ENCODE measurements at regions of chr7 and their contacts with region 1.

Region 1: GRCh38 chr7:47100817-47101435 is 481.0 kb downstream of the TNS3 start:
- H3K4me3 ChIP-seq: no peak overlapping the region
- H3K27ac ChIP-seq: no peak overlapping the region
- H3K4me1 ChIP-seq: no peaks in the 10 kb centered on the region
- CTCF ChIP-seq: no peak

Region 2: DNA sequence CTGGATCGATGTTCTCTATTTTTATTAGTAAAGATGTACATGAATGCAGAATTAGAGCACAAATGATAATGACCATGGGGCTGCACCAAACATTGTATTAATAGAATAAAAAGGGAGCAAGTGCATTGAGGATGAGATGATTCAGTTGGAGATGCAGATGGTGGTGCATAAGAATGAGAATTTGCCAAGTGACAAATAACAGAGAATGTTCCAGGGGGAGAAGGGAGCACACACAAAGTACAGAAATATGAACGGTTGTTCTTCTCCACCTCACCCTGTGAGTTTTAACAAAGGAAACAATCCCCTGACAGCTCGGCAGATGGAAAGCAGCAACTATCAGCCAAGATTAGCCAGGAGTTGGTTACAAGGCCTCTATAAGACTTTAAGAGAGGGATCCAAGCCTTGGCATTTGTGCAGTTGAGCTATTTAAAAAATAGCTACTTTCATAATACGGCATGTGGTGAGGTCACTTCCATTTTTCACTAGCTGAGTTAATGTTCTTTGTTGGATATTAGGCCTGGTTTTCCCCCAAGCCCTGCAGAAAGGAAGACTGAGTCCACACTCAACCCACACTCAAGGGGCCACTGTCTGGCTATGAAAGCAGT is 18.4 kb after region 1 on chr7:
- CTCF ChIA-PET with region 1: interaction called, 11 read pairs
- POLR2A ChIA-PET with region 1: no interaction called
- H3K4me3 ChIP-seq: no peak overlapping the region
- H3K27ac ChIP-seq: no peak overlapping the region
- H3K4me1 ChIP-seq: no peaks in the 10 kb centered on the region
- CTCF ChIP-seq: no peak

Region 3: DNA sequence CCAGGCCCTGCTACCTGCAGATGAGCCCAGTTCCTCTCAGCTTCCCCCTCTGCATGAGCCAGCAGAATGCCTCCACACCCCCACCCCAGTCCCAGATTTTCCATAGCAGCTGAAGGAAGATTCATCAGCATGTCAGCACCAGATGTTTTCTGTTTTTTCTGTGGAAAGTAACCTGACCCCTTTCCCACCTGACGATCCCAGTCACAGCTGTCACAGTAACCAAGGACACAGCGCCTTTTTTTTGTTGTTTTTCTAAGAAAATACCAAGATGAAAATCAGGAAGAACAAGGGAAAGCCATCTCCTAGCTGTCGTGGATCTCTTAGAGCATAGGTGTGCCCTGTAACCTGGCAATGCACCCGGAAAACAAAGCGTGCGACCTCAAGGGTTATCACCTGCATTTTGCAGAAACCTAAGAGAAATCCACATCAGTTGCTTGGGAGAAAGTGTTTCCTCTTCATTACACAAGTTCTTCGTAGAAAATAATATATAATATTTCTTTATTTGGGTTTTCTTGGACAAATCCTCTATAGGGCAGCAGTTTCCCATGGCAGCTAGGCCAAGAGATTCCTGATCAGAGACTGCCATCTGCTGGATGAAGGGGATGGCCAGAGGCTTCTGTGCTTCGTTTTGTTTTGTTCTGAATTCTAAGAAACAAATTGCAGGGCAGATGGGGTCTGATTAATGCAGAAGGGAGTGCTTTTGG is 79.0 kb after region 1 on chr7:
- CTCF ChIA-PET with region 1: interaction called, 11 read pairs
- POLR2A ChIA-PET with region 1: no interaction called
- H3K4me3 ChIP-seq: no peak overlapping the region
- H3K27ac ChIP-seq: no peak overlapping the region
- H3K4me1 ChIP-seq: no peaks in the 10 kb centered on the region
- CTCF ChIP-seq: 0 out of 2 replicates have a peak, but pooled peaks have one; percentile 12

Measured in HEK293 (cell line).